Sciatic nerve (tissue), 2 donors: ENCODE measurements at regions of chr5 and their contacts with region 1.

Region 1: DNA sequence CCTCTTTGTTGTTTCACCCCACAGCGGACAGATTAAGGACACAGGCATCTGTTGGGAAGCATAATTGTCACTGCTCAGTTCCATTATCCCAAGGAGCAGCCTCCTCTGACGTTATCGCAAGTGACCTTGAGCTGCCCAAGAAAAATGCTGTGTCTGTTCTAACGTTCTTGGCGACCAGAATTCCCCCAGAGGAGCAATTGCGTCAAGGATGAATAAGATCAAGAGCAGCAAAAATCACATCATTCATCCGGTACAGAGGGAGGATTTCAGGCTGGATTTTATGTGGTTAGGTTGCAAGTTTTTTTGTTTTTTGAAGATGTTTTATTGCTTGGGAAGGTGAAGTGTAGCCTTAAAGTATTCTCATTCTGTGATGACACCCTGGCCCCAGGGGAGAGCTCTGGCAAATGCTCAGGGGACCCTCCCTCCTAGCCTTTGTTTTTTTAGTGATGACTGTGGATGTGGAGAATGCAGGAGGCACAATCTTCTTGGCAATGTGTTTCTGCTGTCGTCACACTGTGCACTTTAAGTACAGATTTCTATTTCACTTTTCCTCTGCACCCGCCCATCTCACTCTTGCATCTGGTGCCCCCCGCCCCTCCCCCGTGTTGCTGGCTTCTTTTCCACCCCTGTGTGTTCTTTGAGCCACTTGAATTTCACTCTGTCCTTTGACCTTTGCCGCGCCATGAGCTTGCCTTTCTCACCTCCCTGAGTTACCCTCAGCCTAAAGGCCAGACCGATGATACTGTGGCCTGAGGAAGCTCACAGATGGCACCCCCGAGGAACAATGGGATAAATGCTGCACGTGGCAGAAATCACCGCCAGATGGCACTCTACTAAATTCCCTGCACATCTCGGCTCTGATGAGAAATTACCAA is 308.5 kb downstream of the RAB3C start:
- DNase-seq: peak; percentile 83
- ATAC-seq: peak; percentile 85

Region 2: GRCh38 chr5:58972301-58972700 is 81.0 kb after region 1 on chr5:
- intact Hi-C with region 1: no loop called
- DNase-seq: no peak
- ATAC-seq: no peak

Region 3: DNA sequence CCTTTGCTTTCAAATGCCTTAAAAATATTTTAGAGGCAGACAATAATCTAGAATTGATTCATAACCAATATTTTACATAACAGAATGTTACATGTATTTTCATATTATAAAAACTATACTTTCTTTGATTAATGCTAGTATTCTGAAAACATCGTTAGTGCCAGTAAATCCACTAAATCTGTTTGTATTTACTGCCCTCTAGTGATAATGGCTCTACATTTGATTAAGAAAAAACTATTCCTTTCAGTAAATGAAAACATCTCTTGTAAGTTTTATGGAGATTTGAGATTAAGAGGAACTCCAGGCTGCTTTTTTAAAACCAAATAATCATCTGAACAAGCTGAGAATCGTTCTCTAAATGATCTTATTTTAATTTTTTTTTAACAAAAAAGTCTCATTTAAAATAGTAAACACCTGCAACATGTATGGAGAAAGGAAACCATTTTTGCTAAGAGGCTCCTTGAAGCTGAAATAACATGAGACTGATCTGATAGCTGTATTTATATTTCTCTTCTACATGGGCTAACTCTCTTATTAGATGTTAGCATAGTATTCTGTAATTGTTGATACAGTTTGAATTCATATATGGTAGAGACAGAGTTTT is 116.2 kb after region 1 on chr5:
- intact Hi-C with region 1: loop called (anchors 10 kb)
- DNase-seq: no peak
- ATAC-seq: peak; percentile 52

Region 4: DNA sequence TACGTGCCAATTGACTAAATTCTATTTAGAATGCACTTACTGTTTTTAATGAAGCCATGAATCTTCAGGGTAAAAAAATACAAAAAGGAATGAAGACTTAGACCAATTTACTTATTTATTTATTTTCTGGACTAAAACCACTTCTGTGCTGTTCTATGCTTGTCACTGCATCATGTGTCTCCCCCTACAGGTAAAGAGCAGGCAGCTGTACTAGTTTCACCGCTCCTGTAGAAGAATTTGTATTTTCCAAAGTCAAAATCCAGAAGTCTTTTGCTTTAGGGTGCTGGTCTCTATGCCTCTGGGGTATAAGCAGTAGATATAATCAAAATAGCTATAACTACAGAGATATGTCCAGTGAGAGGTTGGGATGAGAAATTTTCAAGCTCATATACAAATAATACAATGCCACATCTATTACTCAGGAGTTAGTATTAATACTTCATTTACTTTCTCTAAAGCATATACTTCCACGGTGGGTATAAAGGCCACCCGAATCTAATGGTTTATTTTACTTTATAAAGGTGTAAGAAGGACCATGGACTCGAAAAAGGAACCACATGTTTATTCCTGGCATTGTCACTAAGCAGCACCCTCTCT is 283.0 kb after region 1 on chr5:
- intact Hi-C with region 1: loop called (anchors 10 kb)
- DNase-seq: no peak
- ATAC-seq: peak; percentile 86